ENCODE measurements at regions of chr22 and their contacts with region 1.

Region 1: DNA sequence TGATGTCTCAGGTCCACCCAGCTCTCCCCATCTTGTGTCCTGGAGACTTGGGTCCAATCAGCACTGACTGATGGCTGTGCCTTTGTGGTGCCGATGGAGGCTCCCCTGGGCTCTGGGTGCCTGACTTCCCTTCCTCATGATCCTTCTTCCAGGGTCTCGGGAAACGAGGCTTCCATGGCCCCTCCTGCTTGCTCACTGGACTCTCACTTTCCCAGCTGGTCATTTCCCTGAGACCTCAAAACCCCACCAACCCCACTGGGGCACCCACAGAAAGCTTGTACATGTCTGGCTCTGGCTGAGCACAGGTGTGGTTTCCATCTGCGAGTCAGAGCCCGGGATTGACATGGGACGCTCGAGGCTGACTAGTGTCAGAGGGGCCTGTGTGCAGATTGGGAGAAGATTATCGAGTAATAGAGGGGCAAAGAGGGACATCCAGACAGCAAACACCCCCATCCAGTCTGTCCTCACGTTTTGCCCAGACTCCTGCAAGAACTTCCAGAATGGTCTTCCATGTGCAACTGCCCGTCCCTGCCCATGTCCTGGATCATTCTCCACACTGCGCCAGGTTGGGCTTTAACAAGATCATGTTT is 15.1 kb downstream of the APOL1 start:
- DNase-seq: no peak
- H3K4me3 ChIP-seq: no peak overlapping the region
- H3K4me3 Mint-ChIP-seq: no peak overlapping the region
- H3K27ac ChIP-seq: no peak overlapping the region
- H3K27ac Mint-ChIP-seq: peak overlapping the region in 2 of 8 donors; percentile 37 to 61
- H3K4me1 ChIP-seq: no peaks in the 10 kb centered on the region
- H3K4me1 Mint-ChIP-seq: peaks cover 0 to 4% (median 0%) of the 10 kb centered on the region in 3 donors
- H3K27me3 ChIP-seq: no peaks in the 10 kb centered on the region
- H3K27me3 Mint-ChIP-seq: peaks cover 0 to 5% of the 10 kb centered on the region in 2 donors

Region 2: DNA sequence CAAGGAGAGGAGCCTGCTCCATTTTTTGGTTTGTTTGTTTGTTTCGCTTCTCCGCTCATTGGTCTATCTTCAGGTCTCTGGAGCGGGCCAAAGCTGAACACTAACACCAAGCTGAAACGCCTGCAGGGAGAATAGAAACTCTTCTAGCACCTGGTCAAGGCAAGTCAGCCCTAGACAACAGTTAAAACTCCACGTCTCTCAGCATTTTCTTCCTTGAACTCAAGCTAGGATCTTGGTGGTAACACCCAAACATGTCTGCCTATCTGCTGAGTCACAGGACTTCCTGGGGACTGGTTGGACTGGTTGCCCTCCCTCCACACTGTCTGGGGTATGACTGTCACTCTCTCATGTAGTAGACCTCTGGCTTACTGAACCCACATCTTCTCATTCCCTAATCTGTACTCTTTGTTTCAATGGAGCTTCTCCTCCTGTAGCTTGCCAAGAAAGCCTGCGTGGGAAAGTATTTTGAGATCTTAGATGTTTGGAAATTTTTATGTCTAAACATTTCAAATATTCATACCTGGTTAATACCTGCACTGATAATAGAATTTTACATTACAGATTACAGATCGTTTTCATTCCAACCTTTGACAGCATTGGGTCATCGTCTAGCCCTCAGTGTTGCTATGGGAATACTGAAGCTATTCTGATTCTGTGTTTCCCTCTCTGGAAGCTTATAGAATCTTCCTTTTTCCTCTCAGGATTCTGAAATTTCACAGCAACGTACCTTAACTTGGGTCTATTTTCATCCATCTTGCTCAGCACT is 215.3 kb before region 1 on chr22:
- CTCF ChIA-PET with region 1: no interaction called
- POLR2A ChIA-PET with region 1: interaction called, 16 read pairs
- DNase-seq: no peak
- H3K4me3 ChIP-seq: no peak overlapping the region
- H3K4me3 Mint-ChIP-seq: no peak overlapping the region
- H3K27ac ChIP-seq: peak overlapping the region; percentile 49
- H3K27ac Mint-ChIP-seq: peak overlapping the region in 1 of 8 donors; percentile 81
- H3K4me1 ChIP-seq: no peaks in the 10 kb centered on the region
- H3K4me1 Mint-ChIP-seq: peaks cover 0 to 11% (median 7%) of the 10 kb centered on the region in 3 donors
- H3K27me3 ChIP-seq: no peaks in the 10 kb centered on the region
- H3K27me3 Mint-ChIP-seq: peaks cover 0 to 21% of the 10 kb centered on the region in 2 donors

Region 3: GRCh38 chr22:36194971-36195370 is 73.0 kb before region 1 on chr22:
- CTCF ChIA-PET with region 1: no interaction called
- POLR2A ChIA-PET with region 1: no interaction called
- DNase-seq: peak in 3 of 5 donors; percentile 19 to 65 (median 38)
- H3K4me3 ChIP-seq: no peak overlapping the region
- H3K4me3 Mint-ChIP-seq: no peak overlapping the region
- H3K27ac ChIP-seq: no peak overlapping the region
- H3K27ac Mint-ChIP-seq: peak overlapping the region in 1 of 8 donors; percentile 21
- H3K4me1 ChIP-seq: no peaks in the 10 kb centered on the region
- H3K4me1 Mint-ChIP-seq: peaks cover 6 to 13% (median 9%) of the 10 kb centered on the region in 3 donors
- H3K27me3 ChIP-seq: no peaks in the 10 kb centered on the region
- H3K27me3 Mint-ChIP-seq: peaks cover 4 to 17% of the 10 kb centered on the region in 2 donors

Region 4: DNA sequence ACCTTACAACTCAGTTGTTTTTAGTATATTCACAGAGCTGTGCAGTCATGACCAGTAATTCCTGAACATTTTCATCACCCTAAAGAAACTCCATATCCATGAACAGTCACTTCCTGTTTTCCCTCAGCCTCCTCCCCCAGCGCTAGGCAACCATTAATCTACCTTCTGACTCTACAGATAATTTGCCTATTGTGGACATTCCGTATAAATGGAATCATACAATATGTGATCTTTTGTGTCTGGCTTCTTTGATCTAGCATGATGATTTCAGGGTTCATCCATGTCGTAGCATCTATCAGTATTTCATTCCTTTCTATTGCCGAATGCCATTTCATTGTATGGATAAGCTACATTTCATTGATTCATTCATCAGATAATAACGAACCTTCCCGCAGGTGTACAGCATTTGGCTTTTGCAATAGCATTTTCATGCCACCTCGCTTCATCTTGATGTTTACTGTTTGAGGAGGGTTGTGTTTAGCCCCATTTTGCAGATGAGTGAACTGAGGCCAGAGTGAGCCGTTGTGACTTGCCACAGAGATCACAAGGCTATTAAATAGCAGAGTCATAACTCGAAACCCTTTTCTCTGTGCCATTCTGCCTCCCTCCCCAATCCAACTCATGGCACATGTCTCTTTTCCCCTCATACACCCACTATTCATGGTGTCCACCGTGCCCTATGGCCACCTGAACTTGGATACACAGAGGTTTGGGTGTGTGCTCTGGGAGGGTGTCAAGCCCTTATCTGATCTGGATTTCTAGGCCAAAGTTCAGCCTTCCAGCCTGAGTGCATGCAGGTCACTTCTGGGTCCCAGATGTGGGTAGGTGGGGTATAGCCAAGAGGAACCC is 130.9 kb after region 1 on chr22:
- CTCF ChIA-PET with region 1: no interaction called
- POLR2A ChIA-PET with region 1: no interaction called
- DNase-seq: no peak
- H3K4me3 ChIP-seq: no peak overlapping the region
- H3K4me3 Mint-ChIP-seq: no peak overlapping the region
- H3K27ac ChIP-seq: no peak overlapping the region
- H3K27ac Mint-ChIP-seq: peak overlapping the region in 4 of 8 donors; percentile 11 to 69 (median 38)
- H3K4me1 ChIP-seq: peaks cover 9% of the 10 kb centered on the region
- H3K4me1 Mint-ChIP-seq: peaks cover 17 to 31% (median 25%) of the 10 kb centered on the region in 3 donors
- H3K27me3 ChIP-seq: no peaks in the 10 kb centered on the region
- H3K27me3 Mint-ChIP-seq: no peaks in the 10 kb centered on the region